Activated CD4-positive, alpha-beta T cell treated with anti-CD3 and anti-CD28 coated beads, Interleukin-2, amount 10 ng/mL, durations not matched to agents 24 days and 14 days (primary cell): ENCODE measurements at regions of chr11 and their contacts with region 1.

Region 1: GRCh38 chr11:116691771-116692177 is 81.0 kb downstream of the BUD13 start:
- DNase-seq: peak; percentile 84
- H3K4me3 Mint-ChIP-seq: no peak overlapping the region
- H3K27ac Mint-ChIP-seq: no peak overlapping the region
- H3K4me1 Mint-ChIP-seq: no peaks in the 10 kb centered on the region
- H3K27me3 Mint-ChIP-seq: peaks cover 3% of the 10 kb centered on the region

Region 2: DNA sequence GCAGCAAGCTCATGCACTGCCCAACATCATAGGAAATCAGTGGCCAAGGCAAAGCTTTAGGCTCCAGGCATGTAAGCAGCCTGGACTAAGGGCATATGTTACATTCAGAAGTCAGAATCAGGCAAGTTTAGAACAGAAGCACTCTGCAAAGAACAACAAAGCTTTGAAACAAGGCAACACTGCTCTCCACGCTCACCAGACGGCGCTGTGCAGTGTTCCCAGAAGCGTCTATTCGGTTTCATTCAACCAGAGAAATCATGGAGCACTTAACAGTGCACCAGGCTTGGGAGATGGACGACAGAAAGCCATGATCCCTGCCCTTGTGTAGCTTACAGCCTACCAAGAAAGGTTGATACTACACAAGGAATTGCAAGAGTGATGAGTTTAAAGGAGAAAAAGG is 474.8 kb before region 1 on chr11:
- intact Hi-C with region 1: loop called (anchors 5 kb)
- DNase-seq: peak; percentile 69
- H3K4me3 Mint-ChIP-seq: no peak overlapping the region
- H3K27ac Mint-ChIP-seq: no peak overlapping the region
- H3K4me1 Mint-ChIP-seq: no peaks in the 10 kb centered on the region
- H3K27me3 Mint-ChIP-seq: no peaks in the 10 kb centered on the region

Region 3: DNA sequence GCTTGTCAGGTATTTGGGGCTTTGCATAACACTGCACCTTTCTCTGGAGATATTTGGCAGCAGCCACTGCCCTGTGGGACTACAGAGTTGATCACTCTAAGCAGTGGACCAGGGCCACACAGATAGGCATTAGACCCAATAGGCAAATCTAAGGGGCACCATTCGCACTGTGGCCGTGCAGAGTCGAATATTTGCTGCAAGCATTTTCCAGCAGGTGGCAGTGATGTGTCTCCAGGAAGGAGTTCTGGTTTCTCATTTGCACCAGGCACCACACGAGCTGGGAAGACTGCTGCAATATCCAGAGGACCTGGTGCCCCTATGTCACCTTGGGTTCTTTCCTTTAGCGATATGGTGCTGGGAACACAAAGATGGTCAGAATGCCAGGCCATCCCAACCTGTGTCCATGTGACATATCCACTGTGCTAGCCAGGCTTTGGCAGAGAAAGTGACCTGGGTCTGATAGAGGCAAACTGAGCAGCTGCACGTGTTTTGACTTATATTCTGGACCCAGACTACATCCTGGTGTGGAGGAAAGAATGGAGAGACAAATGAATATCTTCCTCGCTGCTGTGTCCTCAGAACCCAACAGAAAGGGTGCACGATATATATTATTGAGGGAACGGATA is 237.6 kb before region 1 on chr11:
- intact Hi-C with region 1: loop called (anchors 5 kb)
- DNase-seq: peak; percentile 72
- H3K4me3 Mint-ChIP-seq: no peak overlapping the region
- H3K27ac Mint-ChIP-seq: no peak overlapping the region
- H3K4me1 Mint-ChIP-seq: no peaks in the 10 kb centered on the region
- H3K27me3 Mint-ChIP-seq: peaks cover 2% of the 10 kb centered on the region

Region 4: GRCh38 chr11:116519499-116519898 is 172.3 kb before region 1 on chr11:
- intact Hi-C with region 1: loop called (anchors 5 kb)
- DNase-seq: no peak
- H3K4me3 Mint-ChIP-seq: no peak overlapping the region
- H3K27ac Mint-ChIP-seq: no peak overlapping the region
- H3K4me1 Mint-ChIP-seq: peaks cover 7% of the 10 kb centered on the region
- H3K27me3 Mint-ChIP-seq: peaks cover 4% of the 10 kb centered on the region